CD4-positive, alpha-beta memory T cell (primary cell): ENCODE measurements at regions of chr14 and their contacts with region 1.

Region 1: GRCh38 chr14:36952717-36953116 is 219.7 kb downstream of the SLC25A21 start:
- DNase-seq: no peak
- H3K4me3 ChIP-seq: no peak overlapping the region
- H3K4me3 Mint-ChIP-seq: no peak overlapping the region
- H3K27ac ChIP-seq: no peak overlapping the region
- H3K27ac Mint-ChIP-seq: no peak overlapping the region
- H3K4me1 ChIP-seq: no peaks in the 10 kb centered on the region
- H3K4me1 Mint-ChIP-seq: no peaks in the 10 kb centered on the region
- H3K27me3 ChIP-seq: no peaks in the 10 kb centered on the region
- H3K27me3 Mint-ChIP-seq: peaks cover 0 to 1% of the 10 kb centered on the region in 2 donors

Region 2: DNA sequence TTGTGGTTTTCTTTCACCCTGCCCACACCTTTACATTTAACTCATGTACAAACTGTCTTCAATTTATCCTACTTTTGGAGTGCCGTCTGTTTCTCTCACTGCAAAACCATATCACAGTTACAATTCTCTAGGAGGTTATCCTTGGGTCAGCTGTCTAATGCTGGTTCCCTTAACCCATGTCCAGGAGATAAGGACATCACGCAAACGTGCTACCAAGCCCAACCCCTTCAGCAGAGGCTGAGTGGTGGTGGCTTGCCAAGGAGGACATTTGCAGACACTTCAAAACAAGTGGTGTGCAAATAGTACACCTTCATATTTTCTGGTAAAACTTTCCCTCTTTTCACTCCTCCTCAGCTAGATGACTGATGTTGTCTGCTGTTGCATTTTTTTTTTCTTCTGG is 123.2 kb before region 1 on chr14:
- CTCF ChIA-PET with region 1: no interaction called
- POLR2A ChIA-PET with region 1: no interaction called
- intact Hi-C with region 1: no loop called
- DNase-seq: no peak
- H3K4me3 ChIP-seq: no peak overlapping the region
- H3K4me3 Mint-ChIP-seq: no peak overlapping the region
- H3K27ac ChIP-seq: no peak overlapping the region
- H3K27ac Mint-ChIP-seq: no peak overlapping the region
- H3K4me1 ChIP-seq: no peaks in the 10 kb centered on the region
- H3K4me1 Mint-ChIP-seq: no peaks in the 10 kb centered on the region
- H3K27me3 ChIP-seq: no peaks in the 10 kb centered on the region
- H3K27me3 Mint-ChIP-seq: no peaks in the 10 kb centered on the region

Region 3: GRCh38 chr14:36901861-36902260 is 50.9 kb before region 1 on chr14:
- CTCF ChIA-PET with region 1: no interaction called
- POLR2A ChIA-PET with region 1: no interaction called
- intact Hi-C with region 1: no loop called
- DNase-seq: no peak
- H3K4me3 ChIP-seq: no peak overlapping the region
- H3K4me3 Mint-ChIP-seq: no peak overlapping the region
- H3K27ac ChIP-seq: no peak overlapping the region
- H3K27ac Mint-ChIP-seq: no peak overlapping the region
- H3K4me1 ChIP-seq: no peaks in the 10 kb centered on the region
- H3K4me1 Mint-ChIP-seq: no peaks in the 10 kb centered on the region
- H3K27me3 ChIP-seq: no peaks in the 10 kb centered on the region
- H3K27me3 Mint-ChIP-seq: peaks cover 0 to 1% of the 10 kb centered on the region in 2 donors

Region 4: GRCh38 chr14:36941783-36942521 is 10.8 kb before region 1 on chr14:
- CTCF ChIA-PET with region 1: interaction called, 11 read pairs
- POLR2A ChIA-PET with region 1: no interaction called
- intact Hi-C with region 1: no loop called
- DNase-seq: peak in 4 of 5 donors; percentile 1 to 46 (median 6)
- H3K4me3 ChIP-seq: no peak overlapping the region
- H3K4me3 Mint-ChIP-seq: no peak overlapping the region
- H3K27ac ChIP-seq: no peak overlapping the region
- H3K27ac Mint-ChIP-seq: no peak overlapping the region
- H3K4me1 ChIP-seq: no peaks in the 10 kb centered on the region
- H3K4me1 Mint-ChIP-seq: no peaks in the 10 kb centered on the region
- H3K27me3 ChIP-seq: no peaks in the 10 kb centered on the region
- H3K27me3 Mint-ChIP-seq: peaks cover 6% of the 10 kb centered on the region in 2 donors

Region 5: GRCh38 chr14:37142835-37143401 is 190.2 kb after region 1 on chr14:
- CTCF ChIA-PET with region 1: no interaction called
- POLR2A ChIA-PET with region 1: no interaction called
- intact Hi-C with region 1: no loop called
- DNase-seq: no peak
- H3K4me3 ChIP-seq: no peak overlapping the region
- H3K4me3 Mint-ChIP-seq: no peak overlapping the region
- H3K27ac ChIP-seq: no peak overlapping the region
- H3K27ac Mint-ChIP-seq: no peak overlapping the region
- H3K4me1 ChIP-seq: no peaks in the 10 kb centered on the region
- H3K4me1 Mint-ChIP-seq: no peaks in the 10 kb centered on the region
- H3K27me3 ChIP-seq: no peaks in the 10 kb centered on the region
- H3K27me3 Mint-ChIP-seq: no peaks in the 10 kb centered on the region